ENCODE measurements at regions of chr17 and their contacts with region 1.

Region 1: GRCh38 chr17:76279742-76280287 is 14.7 kb downstream of the UBALD2 start:
- DNase-seq: no peak
- H3K4me3 ChIP-seq: no peak overlapping the region
- H3K27ac ChIP-seq: no peak overlapping the region
- H3K4me1 ChIP-seq: peaks cover 0 to 29% (median 13%) of the 10 kb centered on the region in 6 donors
- H3K27me3 ChIP-seq: no peaks in the 10 kb centered on the region
- CTCF ChIP-seq: peak in 5 of 11 experiments; percentile 2 to 59 (median 19)
- POLR2A ChIP-seq: no peak

Region 2: DNA sequence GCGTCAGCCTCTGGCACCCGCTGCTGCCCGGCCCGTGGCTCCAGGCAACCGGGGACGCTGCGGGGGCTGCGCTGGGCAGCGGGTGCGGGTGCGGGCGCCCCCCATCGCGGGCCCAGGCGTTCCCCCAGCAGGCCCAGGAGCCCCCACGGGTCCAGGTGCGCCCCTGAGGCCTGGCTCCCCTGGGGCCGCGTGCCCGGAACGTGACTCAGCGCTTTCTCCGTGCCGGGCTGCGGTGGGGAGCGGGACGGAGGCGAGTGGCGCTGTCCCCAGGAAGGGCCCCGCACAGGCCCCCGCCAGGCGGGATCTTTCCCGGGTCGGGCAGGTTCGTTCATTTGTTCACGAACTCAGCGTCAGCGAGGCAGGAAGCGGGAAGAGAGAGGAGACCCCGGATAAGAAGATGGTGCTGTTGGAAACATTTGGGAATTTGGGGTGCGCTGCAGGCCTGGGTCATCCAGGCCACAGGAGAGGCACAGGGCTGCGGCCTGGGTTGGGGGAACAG is 157.8 kb before region 1 on chr17:
- intact Hi-C with region 1: loop called (anchors 2 kb)
- DNase-seq: peak; percentile 82
- H3K4me3 ChIP-seq: peak overlapping the region in 7 of 8 donors; percentile 18 to 68 (median 36)
- H3K27ac ChIP-seq: peak overlapping the region in 6 of 8 donors; percentile 36 to 69 (median 58)
- H3K4me1 ChIP-seq: peaks cover 5 to 25% (median 16%) of the 10 kb centered on the region in 6 donors
- H3K27me3 ChIP-seq: peaks cover 0 to 5% (median 0%) of the 10 kb centered on the region in 7 donors
- CTCF ChIP-seq: no peak
- POLR2A ChIP-seq: no peak

Region 3: DNA sequence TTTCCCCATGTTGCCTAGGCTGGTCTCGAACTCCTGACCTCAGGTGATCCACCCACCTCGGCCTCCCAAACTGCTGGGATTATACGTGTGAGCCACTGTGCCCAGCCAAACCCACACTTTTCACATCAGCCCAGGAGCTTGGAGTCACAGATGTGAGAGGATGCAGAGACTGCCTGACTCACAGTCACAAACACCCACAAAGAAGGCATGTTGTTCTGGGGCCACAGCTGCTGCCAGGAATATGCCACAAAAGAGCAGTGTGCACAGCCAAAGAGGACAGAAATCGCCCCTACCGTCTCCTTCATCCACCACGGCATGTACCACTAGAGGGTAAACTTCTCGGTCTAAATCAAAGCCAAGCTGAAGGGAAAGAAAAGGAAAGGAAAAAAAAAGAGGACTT is 113.6 kb before region 1 on chr17:
- intact Hi-C with region 1: no loop called
- DNase-seq: no peak
- H3K4me3 ChIP-seq: no peak overlapping the region
- H3K27ac ChIP-seq: no peak overlapping the region
- H3K4me1 ChIP-seq: no peaks in the 10 kb centered on the region
- H3K27me3 ChIP-seq: no peaks in the 10 kb centered on the region
- CTCF ChIP-seq: no peak
- POLR2A ChIP-seq: no peak

Region 4: DNA sequence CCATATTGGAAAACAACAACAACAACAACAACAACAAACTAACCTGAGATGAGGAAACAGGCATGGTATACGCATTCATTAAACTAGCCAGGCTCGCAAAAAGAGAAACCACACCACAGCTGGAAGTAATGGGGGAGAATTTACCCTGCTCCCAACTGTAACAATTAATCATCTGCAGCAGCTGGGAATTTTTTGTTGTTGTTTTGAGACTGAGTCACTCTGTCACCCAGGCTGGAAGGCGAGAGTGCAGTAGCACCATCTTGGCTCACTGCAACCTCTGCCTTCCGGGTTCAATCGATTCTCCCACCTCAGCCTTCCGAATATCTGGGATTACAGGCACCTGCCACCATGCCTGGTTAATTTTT is 57.6 kb after region 1 on chr17:
- intact Hi-C with region 1: no loop called
- DNase-seq: no peak
- H3K4me3 ChIP-seq: no peak overlapping the region
- H3K27ac ChIP-seq: no peak overlapping the region
- H3K4me1 ChIP-seq: peaks cover 0 to 2% (median 0%) of the 10 kb centered on the region in 6 donors
- H3K27me3 ChIP-seq: no peaks in the 10 kb centered on the region
- CTCF ChIP-seq: no peak
- POLR2A ChIP-seq: no peak

Measured in spleen (tissue), 13 donors.